HEK293 (cell line): ENCODE measurements at regions of chr14 and their contacts with region 1.

Region 1: DNA sequence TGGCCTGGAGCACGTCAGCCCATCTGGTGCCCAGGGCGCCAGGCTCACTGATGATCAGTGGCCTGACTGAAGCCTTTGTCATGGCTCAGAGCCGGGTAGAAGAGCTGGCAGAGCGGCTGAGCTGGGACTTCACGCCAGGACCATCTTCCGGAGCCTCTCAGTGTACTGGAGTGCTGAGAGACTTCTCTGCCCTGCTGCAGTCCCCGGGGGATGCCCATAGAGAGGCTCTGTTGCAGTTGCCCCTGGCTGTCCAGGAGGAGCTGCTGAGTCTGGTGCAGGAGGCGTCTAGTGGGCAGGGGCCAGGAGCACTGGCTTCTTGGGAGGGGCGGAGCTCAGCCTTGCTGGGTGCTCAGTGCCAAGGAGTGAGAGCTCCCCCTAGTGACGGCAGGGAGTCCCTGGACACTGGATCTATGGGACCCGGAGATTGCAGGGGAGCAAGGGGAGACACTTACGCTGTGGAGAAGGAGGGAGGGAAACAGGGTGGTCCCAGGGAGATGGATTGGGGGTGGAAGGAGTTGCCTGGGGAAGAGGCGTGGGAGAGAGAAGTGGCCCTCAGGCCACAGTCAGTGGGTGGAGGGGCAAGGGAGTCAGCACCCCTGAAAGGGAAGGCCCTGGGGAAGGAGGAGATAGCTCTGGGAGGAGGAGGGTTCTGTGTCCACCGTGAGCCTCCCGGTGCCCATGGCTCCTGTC is 2.0 kb downstream of the KHNYN start:
- H3K4me3 ChIP-seq: no peak overlapping the region
- H3K27ac ChIP-seq: peak overlapping the region; percentile 43
- H3K4me1 ChIP-seq: peaks cover 3% of the 10 kb centered on the region; the same call in 1 of the 2 replicates
- CTCF ChIP-seq: peak; percentile 99

Region 2: GRCh38 chr14:24171422-24172260 is 260.1 kb before region 1 on chr14 and contains the start of gene REC8:
- CTCF ChIA-PET with region 1: no interaction called
- POLR2A ChIA-PET with region 1: no interaction called
- H3K4me3 ChIP-seq: peak within 1 kb of the TSS; percentile 17; the same call in 1 of the 2 replicates
- H3K27ac ChIP-seq: no peak within 1 kb of the TSS
- H3K4me1 ChIP-seq: no peaks in the 10 kb centered on the region
- CTCF ChIP-seq: no peak

Region 3: GRCh38 chr14:24241829-24242443 is 189.8 kb before region 1 on chr14:
- CTCF ChIA-PET with region 1: interaction called, 33 read pairs
- POLR2A ChIA-PET with region 1: interaction called, 15 read pairs
- H3K4me3 ChIP-seq: peak overlapping the region; percentile 78
- H3K27ac ChIP-seq: peak overlapping the region; percentile 75
- H3K4me1 ChIP-seq: no peaks in the 10 kb centered on the region
- CTCF ChIP-seq: peak; percentile 84

Region 4: DNA sequence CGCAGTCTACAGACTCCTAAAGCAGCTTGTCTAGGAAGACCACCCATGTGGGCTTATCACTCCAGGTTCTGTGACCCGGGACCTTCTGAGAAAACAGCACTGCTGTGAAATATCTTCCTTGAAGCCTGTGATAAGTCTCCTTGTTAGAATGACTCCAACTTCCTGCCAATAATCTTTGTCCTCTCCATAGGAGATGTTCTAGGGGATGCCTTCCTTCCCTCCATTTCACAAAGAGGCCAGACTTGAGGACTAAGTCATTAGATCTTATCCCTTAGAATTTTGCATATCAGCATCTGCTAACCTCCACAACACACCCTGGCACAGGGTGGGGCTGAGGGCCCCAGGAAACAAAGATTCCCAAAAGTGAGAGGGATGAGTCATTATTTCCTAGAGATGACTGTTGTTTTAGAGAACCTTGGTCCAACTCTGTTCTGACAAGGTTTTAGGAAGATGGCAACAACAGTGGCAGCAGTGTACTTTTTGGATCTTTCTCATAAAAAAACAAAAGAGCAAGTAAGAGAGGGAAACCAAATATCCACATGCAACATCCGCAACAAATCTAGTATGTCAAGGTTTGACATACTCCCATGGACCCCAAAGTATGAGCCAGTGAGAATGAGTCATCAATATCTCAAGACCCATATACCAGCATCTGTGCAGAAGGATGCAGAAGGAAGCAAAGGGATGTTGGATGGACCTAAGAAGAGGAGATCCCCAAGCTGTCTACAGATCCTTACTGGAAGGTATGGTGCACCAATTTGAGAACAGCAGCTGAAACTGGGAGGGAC is 114.4 kb before region 1 on chr14:
- CTCF ChIA-PET with region 1: interaction called, 13 read pairs
- POLR2A ChIA-PET with region 1: interaction called, 4 read pairs
- H3K4me3 ChIP-seq: no peak overlapping the region
- H3K27ac ChIP-seq: no peak overlapping the region
- H3K4me1 ChIP-seq: no peaks in the 10 kb centered on the region
- CTCF ChIP-seq: no peak

Region 5: DNA sequence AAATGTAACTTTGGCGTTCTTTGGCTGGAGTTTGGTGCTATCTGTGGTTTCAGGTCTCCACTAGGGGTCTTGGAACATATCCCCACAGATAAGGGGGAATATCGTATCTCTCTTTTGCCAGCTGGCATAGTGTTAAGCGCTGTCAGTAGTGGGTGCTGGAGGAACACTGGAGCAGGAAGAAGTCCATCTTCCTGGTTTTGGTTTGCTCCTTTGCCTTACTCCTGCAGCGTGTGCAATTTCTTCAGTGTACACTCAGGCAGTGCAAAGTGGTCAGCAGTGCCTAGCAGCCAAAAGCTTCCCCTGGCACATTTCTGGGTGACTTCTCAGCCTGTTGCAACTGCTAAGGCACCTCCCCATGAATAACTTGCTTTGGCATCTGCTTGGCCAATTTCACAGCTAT is 80.2 kb before region 1 on chr14:
- CTCF ChIA-PET with region 1: interaction called, 13 read pairs
- POLR2A ChIA-PET with region 1: no interaction called
- H3K4me3 ChIP-seq: no peak overlapping the region
- H3K27ac ChIP-seq: no peak overlapping the region
- H3K4me1 ChIP-seq: no peaks in the 10 kb centered on the region
- CTCF ChIP-seq: no peak

Region 6: DNA sequence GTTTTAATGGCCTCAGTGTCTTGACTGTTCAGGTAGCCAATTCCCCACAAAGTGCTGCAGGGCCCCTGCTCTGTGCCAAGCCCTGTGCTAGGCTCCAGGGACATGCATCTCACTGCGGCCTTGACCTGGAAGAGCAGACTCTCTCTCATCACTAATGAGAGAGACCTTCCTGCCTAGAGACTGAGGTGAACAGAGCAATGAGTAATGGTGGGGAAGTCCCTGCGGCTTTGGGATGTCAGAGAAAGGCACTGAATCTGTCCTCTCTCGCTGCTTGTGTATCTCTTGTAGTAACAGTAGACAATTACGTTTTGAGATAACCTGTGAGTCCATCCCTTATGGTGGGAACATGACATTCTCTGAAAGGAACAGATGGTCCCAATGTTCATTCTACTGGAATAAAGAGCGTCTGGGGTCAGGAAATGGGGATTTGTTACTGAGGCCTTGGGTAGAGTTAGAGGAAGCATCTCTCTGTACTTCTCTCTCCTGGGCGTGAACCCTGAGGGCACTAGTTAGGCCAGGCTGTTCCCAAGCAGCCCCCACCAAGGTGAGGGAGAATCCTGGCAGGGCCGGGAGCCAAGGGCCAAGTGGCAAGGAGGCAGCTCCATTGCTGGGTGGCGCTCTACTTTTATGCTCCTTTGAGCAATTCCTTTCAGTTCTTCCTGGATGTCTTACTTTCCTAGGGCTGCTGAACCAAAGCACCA is 50.2 kb before region 1 on chr14:
- CTCF ChIA-PET with region 1: interaction called, 21 read pairs
- POLR2A ChIA-PET with region 1: interaction called, 4 read pairs
- H3K4me3 ChIP-seq: no peak overlapping the region
- H3K27ac ChIP-seq: no peak overlapping the region
- H3K4me1 ChIP-seq: peaks cover 8% of the 10 kb centered on the region
- CTCF ChIP-seq: no peak

Region 7: DNA sequence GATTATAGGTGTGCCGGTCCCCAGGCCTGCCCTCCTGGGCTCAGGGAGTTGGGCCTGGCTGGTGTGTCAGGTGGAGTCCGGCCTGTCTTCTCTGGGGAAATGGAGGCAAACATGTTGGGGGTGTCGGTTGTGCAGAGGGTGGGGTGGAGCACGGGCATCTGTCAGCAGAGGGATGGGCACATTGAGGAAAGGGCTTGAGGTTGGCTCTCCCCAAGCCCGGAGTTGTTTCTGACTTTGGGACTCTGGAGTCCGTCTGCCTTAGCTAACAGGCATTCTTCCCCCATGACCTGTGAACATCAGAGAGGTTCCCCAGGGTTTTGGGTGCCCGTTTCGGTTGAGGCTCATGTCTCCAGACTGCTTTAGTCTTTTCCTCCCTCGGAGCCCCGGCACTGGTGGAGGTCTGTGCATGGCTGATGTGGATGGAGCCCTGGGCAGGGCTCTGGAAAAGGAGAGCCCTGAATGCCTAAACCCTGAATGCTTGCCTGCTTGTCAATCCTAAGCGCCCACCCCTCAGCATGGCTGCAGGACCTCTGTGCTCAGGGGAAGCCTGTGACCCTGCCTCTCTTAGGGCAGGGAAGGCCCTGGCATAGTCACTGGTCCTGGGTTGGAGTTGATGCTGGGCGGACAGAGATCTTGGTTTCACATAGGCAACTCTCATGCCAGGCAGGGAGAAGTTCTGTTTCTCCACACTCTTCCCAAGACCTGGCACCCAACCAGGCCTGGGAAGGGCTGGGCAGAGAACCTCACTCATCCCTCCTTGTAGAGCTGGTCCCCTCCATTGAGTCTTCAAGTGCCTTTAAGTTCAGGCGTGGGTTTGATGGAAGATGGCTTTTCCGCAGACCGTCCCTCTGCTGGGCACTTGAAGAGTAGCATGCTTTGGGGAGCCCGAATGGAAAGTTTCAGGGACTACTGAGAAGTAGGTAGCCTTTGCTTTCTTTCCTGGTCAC is 20.0 kb before region 1 on chr14:
- CTCF ChIA-PET with region 1: interaction called, 16 read pairs
- POLR2A ChIA-PET with region 1: interaction called, 5 read pairs
- H3K4me3 ChIP-seq: no peak overlapping the region
- H3K27ac ChIP-seq: no peak overlapping the region
- H3K4me1 ChIP-seq: no peaks in the 10 kb centered on the region
- CTCF ChIP-seq: peak; percentile 42; the same call in 1 of the 2 replicates